ENCODE measurements at regions of chr6 and their contacts with region 1.

Region 1: DNA sequence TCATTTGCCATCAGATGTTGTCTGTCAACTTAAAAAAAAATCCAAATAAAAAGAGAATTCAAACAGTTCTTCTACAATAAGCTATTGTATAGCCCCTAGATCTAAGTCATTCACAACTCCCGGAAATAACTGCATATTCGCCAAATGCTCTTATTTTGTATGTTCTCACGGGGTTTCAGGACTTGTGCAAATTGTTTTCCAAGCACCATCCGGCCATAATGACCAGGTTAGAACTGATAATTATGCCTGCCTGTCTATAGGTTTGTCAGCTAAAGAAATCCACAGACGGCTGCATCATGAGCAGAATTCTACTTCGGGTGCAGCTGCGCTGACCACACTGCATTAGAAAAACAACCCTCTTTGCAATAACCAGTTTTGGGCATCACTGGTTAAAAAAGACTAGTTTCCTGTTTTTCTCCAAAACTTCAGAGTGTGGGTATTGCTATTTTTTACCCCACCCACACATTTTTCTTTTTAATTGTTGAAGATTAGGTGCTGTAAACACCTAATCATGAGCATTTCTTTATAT is 87.7 kb downstream of the HIVEP2 start:
- DNase-seq: peak; percentile 55
- H3K4me3 Mint-ChIP-seq: peak overlapping the region; percentile 71
- H3K27ac Mint-ChIP-seq: peak overlapping the region; percentile 99
- H3K4me1 Mint-ChIP-seq: peaks cover 92% of the 10 kb centered on the region
- H3K27me3 Mint-ChIP-seq: no peaks in the 10 kb centered on the region

Region 2: GRCh38 chr6:142635130-142635529 is 222.2 kb before region 1 on chr6:
- CTCF ChIA-PET with region 1: no interaction called
- POLR2A ChIA-PET with region 1: no interaction called
- DNase-seq: no peak
- H3K4me3 Mint-ChIP-seq: no peak overlapping the region
- H3K27ac Mint-ChIP-seq: no peak overlapping the region
- H3K4me1 Mint-ChIP-seq: peaks cover 2% of the 10 kb centered on the region
- H3K27me3 Mint-ChIP-seq: no peaks in the 10 kb centered on the region

Region 3: GRCh38 chr6:142653710-142654420 is 203.4 kb before region 1 on chr6:
- CTCF ChIA-PET with region 1: no interaction called
- POLR2A ChIA-PET with region 1: no interaction called
- DNase-seq: no peak
- H3K4me3 Mint-ChIP-seq: no peak overlapping the region
- H3K27ac Mint-ChIP-seq: no peak overlapping the region
- H3K4me1 Mint-ChIP-seq: no peaks in the 10 kb centered on the region
- H3K27me3 Mint-ChIP-seq: no peaks in the 10 kb centered on the region

Region 4: DNA sequence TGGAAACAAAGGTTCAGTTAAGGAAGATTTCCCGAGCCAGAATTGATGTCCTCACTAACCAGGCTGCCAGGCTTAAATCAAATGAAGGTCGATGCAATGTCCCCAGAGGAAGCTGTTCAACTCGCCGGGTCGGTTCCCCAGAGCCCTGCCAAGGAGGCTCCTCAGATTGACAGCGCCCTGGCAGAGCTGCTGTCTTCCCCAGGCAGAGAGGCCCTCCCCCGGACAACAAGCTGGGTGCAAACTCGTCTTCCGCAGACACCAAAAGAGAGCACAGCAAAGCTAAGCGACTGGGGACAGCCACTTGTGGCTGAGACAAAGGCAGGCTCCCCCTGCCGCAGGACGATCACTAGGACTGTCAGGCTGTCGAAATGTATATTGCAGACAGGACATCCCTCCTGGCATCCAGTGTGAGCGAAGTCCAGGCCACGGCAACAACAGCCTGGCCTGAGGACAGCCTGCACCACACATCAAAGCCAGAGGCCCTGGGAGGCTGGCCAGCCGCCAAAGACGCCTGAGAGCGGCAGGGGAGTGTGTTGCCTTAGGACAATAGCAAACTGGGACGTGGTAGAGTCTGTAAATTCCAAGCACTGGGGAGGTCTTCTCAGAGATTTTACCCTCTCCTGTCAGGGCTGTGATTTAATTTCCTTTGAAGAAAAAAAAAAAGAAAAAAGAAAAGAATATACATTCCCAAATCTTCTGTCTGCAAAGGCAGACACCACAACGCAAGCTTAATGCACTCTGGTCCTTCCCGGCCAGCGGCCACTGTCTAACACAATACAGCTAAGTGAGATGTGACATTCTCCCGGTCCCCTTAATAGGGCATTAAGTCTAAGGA is 11.5 kb before region 1 on chr6:
- CTCF ChIA-PET with region 1: interaction called, 6 read pairs
- POLR2A ChIA-PET with region 1: interaction called, 15 read pairs
- DNase-seq: peak; percentile 74
- H3K4me3 Mint-ChIP-seq: peak overlapping the region; percentile 77
- H3K27ac Mint-ChIP-seq: peak overlapping the region; percentile 96
- H3K4me1 Mint-ChIP-seq: peaks cover 89% of the 10 kb centered on the region
- H3K27me3 Mint-ChIP-seq: no peaks in the 10 kb centered on the region

Region 5: GRCh38 chr6:142871910-142872331 is 14.6 kb after region 1 on chr6:
- CTCF ChIA-PET with region 1: interaction called, 12 read pairs
- POLR2A ChIA-PET with region 1: no interaction called
- DNase-seq: peak; percentile 68
- H3K4me3 Mint-ChIP-seq: no peak overlapping the region
- H3K27ac Mint-ChIP-seq: no peak overlapping the region
- H3K4me1 Mint-ChIP-seq: peaks cover 79% of the 10 kb centered on the region
- H3K27me3 Mint-ChIP-seq: no peaks in the 10 kb centered on the region

Region 6: DNA sequence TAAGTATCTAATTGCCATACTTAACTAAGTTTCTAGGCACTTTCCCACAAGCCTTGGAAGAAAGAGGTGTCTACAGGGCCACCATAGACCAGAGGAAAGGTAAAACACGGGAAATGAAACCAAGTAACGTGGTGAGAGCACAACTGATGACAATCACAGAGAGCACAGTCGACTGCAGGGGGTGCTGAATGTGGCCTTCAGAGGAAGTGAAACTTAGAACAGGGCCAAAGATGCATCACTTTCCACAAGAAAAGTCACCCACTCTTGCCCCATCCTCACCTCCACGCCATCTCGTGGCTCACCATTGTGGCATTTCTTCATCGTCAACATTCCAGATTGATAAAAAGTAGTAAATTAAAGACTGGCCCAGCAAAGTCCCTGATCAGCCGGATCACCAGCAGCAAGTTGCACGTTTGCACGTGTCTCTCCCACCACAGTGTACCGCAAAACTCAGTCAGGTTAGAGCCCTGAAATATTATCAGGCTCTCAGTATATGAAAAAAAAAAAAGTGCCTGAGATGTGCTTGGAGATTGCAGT is 56.3 kb after region 1 on chr6:
- CTCF ChIA-PET with region 1: no interaction called
- POLR2A ChIA-PET with region 1: no interaction called
- DNase-seq: peak; percentile 83
- H3K4me3 Mint-ChIP-seq: peak overlapping the region; percentile 77
- H3K27ac Mint-ChIP-seq: peak overlapping the region; percentile 99
- H3K4me1 Mint-ChIP-seq: peaks cover 79% of the 10 kb centered on the region
- H3K27me3 Mint-ChIP-seq: no peaks in the 10 kb centered on the region

Region 7: DNA sequence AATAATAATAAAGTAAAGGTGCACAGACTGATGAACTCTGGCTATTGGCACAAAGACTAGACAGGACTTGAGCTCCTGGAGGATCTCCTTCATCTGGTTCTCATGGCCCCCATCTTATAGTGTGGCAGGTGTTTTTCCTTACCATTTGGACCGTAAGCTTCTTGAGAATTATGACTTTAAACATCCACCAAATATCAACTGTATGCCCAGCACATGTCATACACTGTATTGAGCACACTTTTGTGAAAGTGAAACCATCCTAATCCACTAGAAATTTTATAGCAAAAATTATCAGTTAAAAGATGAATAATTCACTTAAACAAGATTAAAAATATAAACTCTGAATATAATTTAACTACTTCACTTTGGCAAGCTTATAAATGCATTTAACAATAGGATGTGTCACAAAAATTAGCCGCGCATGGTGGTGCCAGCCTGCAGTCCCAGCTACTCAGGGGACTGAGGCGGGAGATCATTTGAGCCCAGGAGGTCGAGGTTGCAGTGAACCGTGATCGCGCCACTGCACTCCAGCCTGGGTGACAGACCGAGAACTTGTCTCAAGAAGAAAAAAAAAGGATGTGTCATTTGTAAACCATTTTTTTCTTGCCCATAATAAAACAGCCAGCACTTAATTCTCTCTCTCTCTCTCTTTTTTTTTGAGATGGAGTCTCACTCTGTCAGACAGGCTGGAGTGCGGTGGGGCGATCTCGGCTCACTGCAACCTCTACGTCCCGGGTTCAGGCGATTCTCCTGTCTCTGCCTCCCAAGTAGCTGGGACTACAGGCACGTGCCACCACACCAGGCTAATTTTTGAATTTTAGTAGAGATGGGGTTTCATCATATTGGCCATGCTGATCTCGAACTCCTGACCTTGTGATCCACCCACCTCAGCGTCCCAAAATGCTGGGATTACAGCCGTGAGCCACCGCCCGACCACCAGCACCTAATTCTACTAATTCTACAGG is 78.5 kb after region 1 on chr6:
- CTCF ChIA-PET with region 1: no interaction called
- POLR2A ChIA-PET with region 1: interaction called, 10 read pairs
- DNase-seq: peak; percentile 30
- H3K4me3 Mint-ChIP-seq: peak overlapping the region; percentile 74
- H3K27ac Mint-ChIP-seq: peak overlapping the region; percentile 89
- H3K4me1 Mint-ChIP-seq: peaks cover 83% of the 10 kb centered on the region
- H3K27me3 Mint-ChIP-seq: no peaks in the 10 kb centered on the region

Measured in activated CD4-positive, alpha-beta T cell treated with anti-CD3 and anti-CD28 coated beads, Interleukin-2, amount 10 ng/mL, durations not matched to agents 7 days and 5 days (primary cell).